ENCODE measurements at regions of chr2 and their contacts with region 1.

Region 1: GRCh38 chr2:137838255-137839092 is 125.8 kb upstream of the HNMT start:
- DNase-seq: peak; percentile 32
- ATAC-seq: peak; percentile 83
- H3K4me3 ChIP-seq: no peak overlapping the region
- H3K27ac ChIP-seq: no peak overlapping the region
- H3K4me1 ChIP-seq: no peaks in the 10 kb centered on the region
- H3K27me3 ChIP-seq: no peaks in the 10 kb centered on the region
- CTCF ChIP-seq: peak; percentile 73

Region 2: GRCh38 chr2:136423516-136423996 is 1414.9 kb before region 1 on chr2:
- CTCF ChIA-PET with region 1: no interaction called
- POLR2A ChIA-PET with region 1: no interaction called
- in situ Hi-C with region 1: no loop called
- intact Hi-C with region 1: loop called (anchors 2 kb)
- DNase-seq: peak; percentile 35
- ATAC-seq: peak; percentile 99
- H3K4me3 ChIP-seq: peak overlapping the region; percentile 35 to 40
- H3K27ac ChIP-seq: no peak overlapping the region
- H3K4me1 ChIP-seq: no peaks in the 10 kb centered on the region
- H3K27me3 ChIP-seq: peaks cover 17% of the 10 kb centered on the region
- CTCF ChIP-seq: peak; percentile 92

Region 3: GRCh38 chr2:137467246-137467862 is 371.1 kb before region 1 on chr2:
- CTCF ChIA-PET with region 1: interaction called, 3 read pairs
- POLR2A ChIA-PET with region 1: no interaction called
- in situ Hi-C with region 1: no loop called
- intact Hi-C with region 1: loop called (anchors 2 kb)
- DNase-seq: peak; percentile 32
- ATAC-seq: peak; percentile 82
- H3K4me3 ChIP-seq: no peak overlapping the region
- H3K27ac ChIP-seq: no peak overlapping the region
- H3K4me1 ChIP-seq: no peaks in the 10 kb centered on the region
- H3K27me3 ChIP-seq: no peaks in the 10 kb centered on the region
- CTCF ChIP-seq: peak; percentile 74

Region 4: GRCh38 chr2:137693534-137693933 is 144.9 kb before region 1 on chr2:
- CTCF ChIA-PET with region 1: no interaction called
- POLR2A ChIA-PET with region 1: no interaction called
- in situ Hi-C with region 1: no loop called
- intact Hi-C with region 1: loop called (anchors 10 kb)
- DNase-seq: no peak
- ATAC-seq: no peak
- H3K4me3 ChIP-seq: no peak overlapping the region
- H3K27ac ChIP-seq: no peak overlapping the region
- H3K4me1 ChIP-seq: no peaks in the 10 kb centered on the region
- H3K27me3 ChIP-seq: no peaks in the 10 kb centered on the region
- CTCF ChIP-seq: no peak

Measured in Panc1 (cell line).